ENCODE measurements at regions of chr6 and their contacts with region 1.

Region 1: DNA sequence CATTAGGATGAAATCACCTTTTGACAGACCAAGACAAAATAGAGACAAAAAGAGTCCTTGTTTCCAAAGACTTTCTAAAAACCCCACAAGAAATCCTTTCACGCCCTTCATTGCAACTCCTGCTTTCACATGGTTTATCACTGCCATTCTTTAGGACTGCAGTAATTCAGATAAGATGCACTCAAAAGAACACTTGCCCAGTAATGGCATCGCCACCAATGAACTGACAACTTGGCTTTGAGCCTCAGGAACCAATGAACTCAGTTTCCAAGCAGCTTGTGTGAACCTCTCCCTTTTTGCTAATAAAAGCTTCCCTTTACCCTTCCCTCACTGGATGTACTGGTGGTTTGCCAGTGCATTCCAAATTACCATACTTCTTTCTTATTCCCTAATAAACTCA is 21.8 kb downstream of the OSTM1 start:
- DNase-seq: no peak
- ATAC-seq: no peak
- H3K4me3 ChIP-seq: no peak overlapping the region
- H3K27ac ChIP-seq: no peak overlapping the region
- H3K4me1 ChIP-seq: no peaks in the 10 kb centered on the region
- H3K27me3 ChIP-seq: no peaks in the 10 kb centered on the region
- CTCF ChIP-seq: no peak

Region 2: DNA sequence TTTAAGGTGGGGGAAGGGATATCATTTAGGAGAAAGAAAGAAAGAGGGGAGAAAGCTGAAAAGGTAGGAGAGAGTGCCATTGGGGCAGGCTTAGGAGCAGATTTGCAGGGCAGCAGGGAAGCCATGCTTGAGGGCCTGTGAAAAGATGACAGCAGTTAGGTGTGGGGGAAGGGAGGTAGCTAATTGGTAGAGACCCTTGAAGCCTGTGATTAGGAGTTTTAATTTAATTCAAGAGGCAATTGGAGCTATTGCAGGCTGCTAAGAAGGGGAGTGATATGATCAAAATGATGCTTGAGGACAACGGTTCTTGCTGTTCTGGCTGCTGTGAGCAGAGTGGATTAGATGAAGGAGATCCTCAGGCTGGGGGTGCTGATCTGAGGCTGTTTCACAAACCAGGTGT is 70.2 kb before region 1 on chr6:
- intact Hi-C with region 1: loop called (anchors 5 kb)
- DNase-seq: no peak
- ATAC-seq: no peak
- H3K4me3 ChIP-seq: no peak overlapping the region
- H3K27ac ChIP-seq: no peak overlapping the region
- H3K4me1 ChIP-seq: no peaks in the 10 kb centered on the region
- H3K27me3 ChIP-seq: peaks cover 0 to 10% (median 0%) of the 10 kb centered on the region in 3 donors
- CTCF ChIP-seq: no peak

Region 3: DNA sequence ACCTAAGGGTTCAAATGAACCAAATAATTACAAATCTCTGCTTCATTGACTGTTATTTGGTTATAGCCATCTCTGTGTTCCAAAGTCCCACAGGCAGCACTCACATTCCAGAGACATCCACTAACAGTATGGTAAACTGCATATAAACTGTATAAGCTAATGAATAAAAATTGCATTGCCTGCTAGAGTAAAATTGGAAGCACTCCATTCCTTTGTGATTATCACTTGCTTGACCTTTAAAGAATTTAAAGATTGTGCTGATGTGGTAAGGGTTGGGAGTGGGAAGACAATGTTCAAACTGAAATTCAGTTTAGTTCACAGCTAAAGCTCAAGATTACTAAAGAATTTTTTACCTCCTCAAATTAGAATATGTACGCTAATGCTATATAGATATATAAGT is 52.9 kb after region 1 on chr6:
- intact Hi-C with region 1: no loop called
- DNase-seq: no peak
- ATAC-seq: no peak
- H3K4me3 ChIP-seq: no peak overlapping the region
- H3K27ac ChIP-seq: no peak overlapping the region
- H3K4me1 ChIP-seq: no peaks in the 10 kb centered on the region
- H3K27me3 ChIP-seq: peaks cover 0 to 7% (median 0%) of the 10 kb centered on the region in 3 donors
- CTCF ChIP-seq: no peak

Measured in psoas muscle (tissue), 8 donors.